ENCODE measurements at regions of chr2 and their contacts with region 1.

Region 1: DNA sequence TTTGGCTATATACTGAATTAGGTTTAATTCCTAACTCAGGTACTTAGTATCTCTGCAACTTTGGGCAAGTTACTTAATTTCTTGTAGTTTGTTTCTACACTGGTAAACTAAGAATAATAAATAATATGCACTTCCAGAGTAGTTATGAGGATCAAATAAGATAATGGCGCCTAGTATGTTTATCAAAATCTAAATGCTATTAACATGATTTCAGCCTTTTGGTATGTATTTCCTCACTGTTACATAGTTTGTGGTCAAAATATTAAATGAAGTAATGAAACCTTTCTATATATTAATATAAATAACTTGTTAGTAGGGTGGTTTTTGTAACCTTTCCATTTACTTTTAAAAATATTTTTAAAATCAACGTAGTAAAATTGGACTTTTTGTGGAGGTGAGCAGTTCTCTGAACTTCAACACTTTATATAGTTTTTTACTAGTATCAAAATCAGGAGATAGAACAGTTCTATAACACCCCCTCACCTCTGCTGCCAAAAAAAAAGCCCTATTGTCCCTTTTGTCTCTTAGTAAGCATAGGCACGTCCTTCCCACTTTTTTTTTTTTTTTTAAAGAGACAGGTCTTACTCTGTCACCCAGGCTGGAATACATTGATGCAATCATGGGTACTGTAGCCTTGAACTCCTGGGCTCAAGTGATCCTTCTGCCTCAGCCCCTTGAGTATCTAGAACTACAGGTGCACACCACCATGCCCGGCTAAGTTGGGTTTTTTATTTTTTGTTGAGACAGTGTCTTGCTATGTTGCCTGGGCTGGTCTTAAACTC is 44.8 kb downstream of the RAB3GAP1 start:
- DNase-seq: peak; percentile 61
- ATAC-seq: peak; percentile 76
- H3K4me3 ChIP-seq: no peak overlapping the region
- H3K27ac ChIP-seq: peak overlapping the region; percentile 81; the same call in 1 of the 2 replicates
- H3K4me1 ChIP-seq: peaks cover 8% of the 10 kb centered on the region
- H3K27me3 ChIP-seq: no peaks in the 10 kb centered on the region
- CTCF ChIP-seq: no peak
- POLR2A ChIP-seq: no peak
- RAD21 ChIP-seq: no peak

Region 2: DNA sequence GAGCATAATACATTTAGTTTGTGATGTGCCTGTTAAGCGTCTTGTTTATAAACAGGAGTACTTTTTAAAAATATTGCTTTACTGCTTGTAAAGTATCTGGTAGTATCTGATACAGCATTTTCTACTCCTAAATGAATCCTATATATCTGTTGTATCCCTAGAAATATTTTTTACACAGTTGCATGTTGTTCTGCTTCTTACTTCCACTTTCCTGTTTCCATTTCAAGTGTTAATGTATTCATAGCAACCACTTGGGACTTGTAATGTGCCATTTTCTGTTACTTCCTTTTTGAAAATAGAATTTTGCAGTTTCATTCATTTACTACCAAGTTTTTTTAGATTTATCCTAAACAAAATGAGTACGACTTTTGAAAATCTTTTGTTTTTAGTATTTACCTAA is 153.3 kb before region 1 on chr2:
- CTCF ChIA-PET with region 1: no interaction called
- POLR2A ChIA-PET with region 1: no interaction called
- dilution Hi-C with region 1: no loop called
- in situ Hi-C with region 1: no loop called
- intact Hi-C with region 1: no loop called
- DNase-seq: no peak
- ATAC-seq: no peak
- H3K4me3 ChIP-seq: no peak overlapping the region
- H3K27ac ChIP-seq: no peak overlapping the region
- H3K4me1 ChIP-seq: no peaks in the 10 kb centered on the region
- H3K27me3 ChIP-seq: no peaks in the 10 kb centered on the region
- CTCF ChIP-seq: no peak
- POLR2A ChIP-seq: no peak
- RAD21 ChIP-seq: no peak

Region 3: GRCh38 chr2:135052042-135052876 is 44.6 kb before region 1 on chr2 and contains the start of gene RAB3GAP1:
- CTCF ChIA-PET with region 1: no interaction called
- POLR2A ChIA-PET with region 1: no interaction called
- dilution Hi-C with region 1: no loop called
- in situ Hi-C with region 1: no loop called
- intact Hi-C with region 1: loop called (anchors 5 kb)
- DNase-seq: peak; percentile 83
- ATAC-seq: peak; percentile 94
- H3K4me3 ChIP-seq: peak within 1 kb of the TSS; percentile 71
- H3K27ac ChIP-seq: peak within 1 kb of the TSS; percentile 82
- H3K4me1 ChIP-seq: no peaks in the 10 kb centered on the region; the same call in 1 of the 2 replicates
- H3K27me3 ChIP-seq: peaks cover 3% of the 10 kb centered on the region; the same call in 1 of the 2 replicates
- CTCF ChIP-seq: no peak
- POLR2A ChIP-seq: peak; percentile 94
- RAD21 ChIP-seq: no peak
- total RNA-seq, gene RAB3GAP1: 65.8 and 85.5 TPM in 2 replicates

Region 4: GRCh38 chr2:135150684-135151083 is 53.8 kb after region 1 on chr2:
- CTCF ChIA-PET with region 1: no interaction called
- POLR2A ChIA-PET with region 1: no interaction called
- dilution Hi-C with region 1: no loop called
- in situ Hi-C with region 1: no loop called
- intact Hi-C with region 1: loop called (anchors 5 kb)
- DNase-seq: no peak
- ATAC-seq: no peak
- H3K4me3 ChIP-seq: no peak overlapping the region
- H3K27ac ChIP-seq: no peak overlapping the region
- H3K4me1 ChIP-seq: no peaks in the 10 kb centered on the region
- H3K27me3 ChIP-seq: no peaks in the 10 kb centered on the region
- CTCF ChIP-seq: no peak
- POLR2A ChIP-seq: no peak
- RAD21 ChIP-seq: no peak

Region 5: DNA sequence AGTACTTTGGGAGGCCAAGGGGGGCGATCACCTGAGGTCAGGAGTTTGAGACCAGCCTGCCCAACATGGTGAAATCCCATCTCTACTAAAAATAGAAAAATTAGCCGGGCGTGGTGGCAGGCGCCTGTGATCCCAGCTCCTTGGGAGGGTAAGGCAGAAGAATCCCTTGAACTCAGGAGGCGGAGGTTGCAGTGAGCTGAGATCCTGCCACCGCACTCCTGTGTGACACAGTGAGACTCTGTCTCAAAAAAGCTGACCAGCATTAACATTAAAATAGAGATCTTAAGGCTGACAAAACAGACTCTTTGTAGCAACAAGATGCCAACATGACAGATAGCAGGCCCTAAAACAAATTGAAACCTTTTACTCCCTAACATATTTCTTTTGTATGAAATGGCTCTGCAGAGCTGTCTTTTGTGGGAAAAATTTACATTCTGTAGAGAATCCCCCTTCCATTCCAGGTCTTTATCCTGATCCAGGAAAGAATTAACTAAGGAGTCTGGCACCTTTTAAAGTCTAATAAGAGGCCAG is 169.2 kb after region 1 on chr2:
- CTCF ChIA-PET with region 1: no interaction called
- POLR2A ChIA-PET with region 1: no interaction called
- dilution Hi-C with region 1: no loop called
- in situ Hi-C with region 1: no loop called
- intact Hi-C with region 1: no loop called
- DNase-seq: no peak
- ATAC-seq: no peak
- H3K4me3 ChIP-seq: no peak overlapping the region
- H3K27ac ChIP-seq: no peak overlapping the region
- H3K4me1 ChIP-seq: no peaks in the 10 kb centered on the region
- H3K27me3 ChIP-seq: no peaks in the 10 kb centered on the region
- CTCF ChIP-seq: no peak
- POLR2A ChIP-seq: no peak
- RAD21 ChIP-seq: no peak